ENCODE measurements at regions of chr10 and their contacts with region 1.

Region 1: DNA sequence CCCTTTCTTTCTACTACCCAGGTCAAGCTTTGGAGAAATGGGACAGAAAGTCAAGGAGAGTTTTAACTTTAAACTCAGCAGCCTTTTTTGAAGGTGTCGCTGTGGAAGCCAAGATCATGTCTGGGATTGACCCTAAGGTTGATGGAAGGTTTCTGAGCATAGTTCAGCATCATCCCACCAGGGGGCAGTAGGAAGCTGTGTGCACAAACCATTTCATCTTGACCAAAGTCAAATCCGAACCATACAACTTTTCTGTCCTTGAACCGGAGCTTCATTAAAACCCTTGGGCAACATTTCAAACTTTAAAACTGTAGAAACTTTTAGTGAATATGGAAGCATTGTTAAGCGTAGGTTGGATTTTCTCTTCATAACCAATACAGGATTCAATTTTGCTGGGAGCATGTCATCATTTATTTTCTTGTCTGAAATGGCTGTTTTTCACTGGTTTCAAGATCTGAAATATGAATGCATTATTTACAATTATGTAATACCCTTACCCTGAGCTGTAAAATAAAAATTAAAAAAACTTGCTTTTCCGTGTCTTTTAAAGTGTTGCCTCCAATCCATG is 214.4 kb upstream of the KIAA1217 start:
- DNase-seq: peak in 2 of 3 donors; percentile 35 to 64
- ATAC-seq: peak; percentile 85 to 92 (median 88)
- H3K4me3 ChIP-seq: no peak overlapping the region
- H3K27ac ChIP-seq: no peak overlapping the region
- H3K4me1 ChIP-seq: no peaks in the 10 kb centered on the region
- H3K27me3 ChIP-seq: no peaks in the 10 kb centered on the region
- CTCF ChIP-seq: peak; percentile 73 to 88 (median 82)
- POLR2A ChIP-seq: no peak

Region 2: GRCh38 chr10:23139677-23140076 is 854.9 kb before region 1 on chr10:
- intact Hi-C with region 1: no loop called
- DNase-seq: no peak
- ATAC-seq: no peak
- H3K4me3 ChIP-seq: no peak overlapping the region
- H3K27ac ChIP-seq: no peak overlapping the region
- H3K4me1 ChIP-seq: no peaks in the 10 kb centered on the region
- H3K27me3 ChIP-seq: no peaks in the 10 kb centered on the region
- CTCF ChIP-seq: no peak
- POLR2A ChIP-seq: no peak

Region 3: DNA sequence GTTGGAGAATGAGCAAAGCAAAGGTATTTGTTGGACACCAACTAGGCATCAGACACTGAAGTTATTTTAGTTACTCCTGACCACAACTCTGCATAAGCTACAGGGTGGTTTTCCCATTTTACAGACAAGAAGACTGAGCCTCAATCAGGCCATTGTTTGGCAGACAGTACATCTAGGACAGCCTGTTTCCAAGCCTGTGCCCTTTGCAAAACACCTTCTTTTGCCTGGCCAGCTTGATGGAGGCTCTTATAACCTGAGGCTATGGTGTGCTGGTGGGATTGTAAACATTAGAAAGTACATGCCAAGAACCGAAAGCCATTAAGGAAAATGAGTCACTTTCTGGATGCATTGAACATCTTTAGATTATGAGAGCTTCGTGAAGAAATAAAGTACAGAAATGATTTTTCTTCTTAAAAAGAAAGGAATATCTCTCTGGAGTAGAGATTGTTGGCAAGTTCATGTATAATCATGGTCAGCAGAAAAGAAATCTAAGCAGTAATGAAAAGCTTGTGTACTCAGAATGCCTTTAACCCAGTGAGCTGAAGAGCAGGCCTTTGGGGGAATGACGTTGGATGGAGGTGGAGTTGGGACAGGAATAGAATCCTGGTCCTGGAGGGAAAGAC is 354.9 kb after region 1 on chr10:
- intact Hi-C with region 1: loop called in 1 of 2 experiments (anchors 10 kb)
- DNase-seq: no peak
- ATAC-seq: no peak
- H3K4me3 ChIP-seq: no peak overlapping the region
- H3K27ac ChIP-seq: no peak overlapping the region
- H3K4me1 ChIP-seq: no peaks in the 10 kb centered on the region
- H3K27me3 ChIP-seq: no peaks in the 10 kb centered on the region
- CTCF ChIP-seq: no peak
- POLR2A ChIP-seq: no peak